Activated CD8-positive, alpha-beta T cell treated with anti-CD3 and anti-CD28 coated beads, Interleukin-2, amount 10 ng/mL, durations not matched to agents 7 days and 5 days (primary cell): ENCODE measurements at regions of chr1 and their contacts with region 1.

Region 1: DNA sequence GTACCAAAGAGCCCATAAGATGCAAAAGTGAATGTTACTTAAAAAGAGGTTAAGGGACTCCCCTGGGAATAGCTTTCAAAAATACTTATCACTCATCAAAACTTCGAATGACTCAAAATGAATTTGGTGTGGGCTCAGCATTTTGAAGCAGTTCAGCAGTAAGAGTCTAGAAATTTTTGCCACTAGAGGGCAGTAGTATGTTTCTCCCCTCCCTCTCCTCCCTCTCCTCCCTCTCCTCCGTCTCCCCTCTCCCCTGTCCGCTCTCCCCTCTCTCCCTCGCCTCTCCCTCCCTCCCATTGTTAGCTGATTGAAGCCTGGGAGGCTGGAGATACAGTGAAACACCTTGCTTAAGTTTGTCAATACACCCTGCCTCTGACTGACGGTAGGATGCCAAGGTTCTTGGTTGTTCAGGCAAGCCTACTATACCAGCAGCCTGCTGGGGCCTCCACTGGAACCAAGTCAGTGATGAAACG is 70.8 kb upstream of the TENT5C start:
- DNase-seq: peak; percentile 47
- ATAC-seq: peak; percentile 86
- H3K4me3 Mint-ChIP-seq: no peak overlapping the region
- H3K27ac Mint-ChIP-seq: no peak overlapping the region
- H3K4me1 Mint-ChIP-seq: peaks cover under 1% of the 10 kb centered on the region
- H3K27me3 Mint-ChIP-seq: no peaks in the 10 kb centered on the region

Region 2: GRCh38 chr1:117512743-117513321 is 22.2 kb before region 1 on chr1:
- CTCF ChIA-PET with region 1: interaction called, 40 read pairs
- POLR2A ChIA-PET with region 1: no interaction called
- DNase-seq: no peak
- ATAC-seq: peak; percentile 27
- H3K4me3 Mint-ChIP-seq: no peak overlapping the region
- H3K27ac Mint-ChIP-seq: no peak overlapping the region
- H3K4me1 Mint-ChIP-seq: no peaks in the 10 kb centered on the region
- H3K27me3 Mint-ChIP-seq: no peaks in the 10 kb centered on the region

Region 3: DNA sequence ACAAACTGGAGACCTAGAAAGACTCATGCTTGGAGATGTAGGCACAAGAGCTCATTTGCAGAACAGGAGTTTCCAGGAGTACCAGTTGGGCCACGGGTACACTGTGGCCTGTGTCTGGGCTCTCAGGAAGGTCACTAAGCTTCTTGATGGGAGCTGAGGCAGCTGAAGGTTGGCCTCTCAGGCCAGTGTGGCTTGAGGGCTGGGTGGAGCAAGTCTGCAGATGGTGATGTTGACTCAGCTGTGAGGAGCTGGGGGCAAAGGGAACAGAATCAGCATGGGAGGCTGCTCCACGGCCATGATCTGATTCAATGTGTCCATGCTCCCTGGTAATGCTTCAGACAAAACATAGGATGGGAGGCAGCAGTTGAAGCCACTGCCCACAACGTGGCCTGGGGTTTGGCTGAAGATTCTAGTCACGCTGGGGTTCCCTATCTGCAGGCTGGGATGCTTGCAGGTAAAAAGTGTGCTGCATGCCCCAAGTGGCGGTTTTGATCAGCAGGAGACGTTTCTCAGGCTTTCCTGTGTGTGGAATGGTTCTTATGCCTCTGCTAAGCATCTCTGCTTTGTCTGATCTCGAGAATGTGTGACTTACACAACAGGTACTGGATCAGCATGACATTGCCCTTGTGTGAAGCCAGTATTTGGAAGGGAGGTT is 55.4 kb after region 1 on chr1:
- CTCF ChIA-PET with region 1: interaction called, 13 read pairs
- POLR2A ChIA-PET with region 1: no interaction called
- DNase-seq: no peak
- ATAC-seq: no peak
- H3K4me3 Mint-ChIP-seq: no peak overlapping the region
- H3K27ac Mint-ChIP-seq: no peak overlapping the region
- H3K4me1 Mint-ChIP-seq: no peaks in the 10 kb centered on the region
- H3K27me3 Mint-ChIP-seq: peaks cover 2% of the 10 kb centered on the region

Region 4: GRCh38 chr1:117631359-117632160 is 96.5 kb after region 1 on chr1:
- CTCF ChIA-PET with region 1: interaction called, 11 read pairs
- POLR2A ChIA-PET with region 1: no interaction called
- DNase-seq: no peak
- ATAC-seq: peak; percentile 31
- H3K4me3 Mint-ChIP-seq: no peak overlapping the region
- H3K27ac Mint-ChIP-seq: no peak overlapping the region
- H3K4me1 Mint-ChIP-seq: peaks cover 45% of the 10 kb centered on the region
- H3K27me3 Mint-ChIP-seq: peaks cover 6% of the 10 kb centered on the region

Region 5: GRCh38 chr1:117664314-117664713 is 129.3 kb after region 1 on chr1:
- CTCF ChIA-PET with region 1: interaction called, 159 read pairs
- POLR2A ChIA-PET with region 1: no interaction called
- DNase-seq: peak; percentile 86
- ATAC-seq: peak; percentile 73
- H3K4me3 Mint-ChIP-seq: peak overlapping the region; percentile 36
- H3K27ac Mint-ChIP-seq: peak overlapping the region; percentile 84
- H3K4me1 Mint-ChIP-seq: peaks cover 84% of the 10 kb centered on the region
- H3K27me3 Mint-ChIP-seq: peaks cover 3% of the 10 kb centered on the region

Region 6: GRCh38 chr1:117695796-117696490 is 160.9 kb after region 1 on chr1:
- CTCF ChIA-PET with region 1: interaction called, 17 read pairs
- POLR2A ChIA-PET with region 1: no interaction called
- DNase-seq: no peak
- ATAC-seq: no peak
- H3K4me3 Mint-ChIP-seq: no peak overlapping the region
- H3K27ac Mint-ChIP-seq: no peak overlapping the region
- H3K4me1 Mint-ChIP-seq: peaks cover 25% of the 10 kb centered on the region
- H3K27me3 Mint-ChIP-seq: peaks cover 33% of the 10 kb centered on the region

Region 7: DNA sequence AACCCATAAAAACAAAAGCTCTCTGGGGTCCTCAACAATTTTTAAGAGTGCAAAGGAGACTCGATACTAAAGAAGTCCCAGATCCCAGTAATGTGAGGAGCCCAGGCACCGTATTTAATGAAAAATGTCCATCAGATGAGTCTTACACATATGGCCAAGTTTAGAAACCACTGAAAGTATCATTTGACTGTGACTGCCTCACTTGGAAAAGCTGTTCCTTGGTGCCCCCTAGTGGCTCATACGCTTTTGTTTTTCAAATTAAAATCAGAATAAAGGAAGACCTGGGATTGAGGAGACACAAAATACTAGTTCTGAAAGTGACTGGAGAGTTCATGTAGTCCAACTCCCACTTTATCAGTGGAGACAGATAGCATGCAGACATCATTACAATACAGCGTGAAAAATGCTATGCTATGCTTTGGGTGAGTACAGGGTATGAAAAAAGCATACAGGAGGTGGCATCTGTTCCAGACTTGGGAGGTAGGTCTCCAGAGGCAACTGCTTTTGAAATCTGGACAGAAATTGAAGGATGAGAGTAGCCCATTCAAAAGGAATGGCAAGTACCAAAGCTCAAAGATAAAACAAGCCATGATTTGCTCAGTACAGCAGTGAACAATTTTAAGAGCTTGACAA is 360.6 kb after region 1 on chr1:
- CTCF ChIA-PET with region 1: interaction called, 32 read pairs
- POLR2A ChIA-PET with region 1: no interaction called
- DNase-seq: peak; percentile 77
- ATAC-seq: peak; percentile 72
- H3K4me3 Mint-ChIP-seq: no peak overlapping the region
- H3K27ac Mint-ChIP-seq: no peak overlapping the region
- H3K4me1 Mint-ChIP-seq: no peaks in the 10 kb centered on the region
- H3K27me3 Mint-ChIP-seq: no peaks in the 10 kb centered on the region